ENCODE measurements at regions of chr13 and their contacts with region 1.

Region 1: DNA sequence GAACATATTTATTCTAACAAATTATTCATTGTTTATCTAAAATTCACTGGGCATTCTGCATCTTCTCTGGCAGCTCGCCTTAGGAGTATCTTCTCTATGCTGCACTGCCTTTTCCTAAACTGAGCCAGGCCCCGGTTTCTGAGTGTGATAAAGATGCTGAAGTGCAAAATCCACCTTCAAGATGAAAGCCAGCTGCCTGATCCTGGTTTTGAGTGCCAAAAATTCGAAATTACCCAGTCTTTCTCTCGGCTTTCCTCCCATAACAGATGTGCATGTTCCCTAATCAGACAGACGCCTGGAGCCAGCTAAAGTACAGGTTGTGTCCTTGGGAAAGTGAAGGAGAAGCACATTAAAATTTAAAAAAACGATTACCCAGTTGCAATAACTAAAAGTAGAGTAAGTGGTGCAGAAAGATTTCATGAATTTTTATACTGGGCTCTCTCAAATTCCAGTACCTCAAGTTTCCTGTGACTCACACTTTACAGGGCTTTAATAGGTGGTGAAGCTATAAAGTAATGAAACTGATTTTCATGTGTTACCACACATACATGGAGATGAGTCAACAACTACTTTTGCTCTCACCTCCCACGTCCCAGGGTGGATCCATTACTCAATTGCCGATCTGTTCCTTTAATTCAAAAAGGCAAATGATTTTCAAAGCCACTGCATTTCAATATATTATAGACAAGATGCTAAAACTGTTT is 65.0 kb upstream of the GTF2F2 start:
- DNase-seq: peak; percentile 73
- H3K4me3 Mint-ChIP-seq: peak overlapping the region; percentile 31
- H3K27ac Mint-ChIP-seq: peak overlapping the region; percentile 57
- H3K4me1 Mint-ChIP-seq: peaks cover 18% of the 10 kb centered on the region
- H3K27me3 Mint-ChIP-seq: peaks cover 43% of the 10 kb centered on the region

Region 2: DNA sequence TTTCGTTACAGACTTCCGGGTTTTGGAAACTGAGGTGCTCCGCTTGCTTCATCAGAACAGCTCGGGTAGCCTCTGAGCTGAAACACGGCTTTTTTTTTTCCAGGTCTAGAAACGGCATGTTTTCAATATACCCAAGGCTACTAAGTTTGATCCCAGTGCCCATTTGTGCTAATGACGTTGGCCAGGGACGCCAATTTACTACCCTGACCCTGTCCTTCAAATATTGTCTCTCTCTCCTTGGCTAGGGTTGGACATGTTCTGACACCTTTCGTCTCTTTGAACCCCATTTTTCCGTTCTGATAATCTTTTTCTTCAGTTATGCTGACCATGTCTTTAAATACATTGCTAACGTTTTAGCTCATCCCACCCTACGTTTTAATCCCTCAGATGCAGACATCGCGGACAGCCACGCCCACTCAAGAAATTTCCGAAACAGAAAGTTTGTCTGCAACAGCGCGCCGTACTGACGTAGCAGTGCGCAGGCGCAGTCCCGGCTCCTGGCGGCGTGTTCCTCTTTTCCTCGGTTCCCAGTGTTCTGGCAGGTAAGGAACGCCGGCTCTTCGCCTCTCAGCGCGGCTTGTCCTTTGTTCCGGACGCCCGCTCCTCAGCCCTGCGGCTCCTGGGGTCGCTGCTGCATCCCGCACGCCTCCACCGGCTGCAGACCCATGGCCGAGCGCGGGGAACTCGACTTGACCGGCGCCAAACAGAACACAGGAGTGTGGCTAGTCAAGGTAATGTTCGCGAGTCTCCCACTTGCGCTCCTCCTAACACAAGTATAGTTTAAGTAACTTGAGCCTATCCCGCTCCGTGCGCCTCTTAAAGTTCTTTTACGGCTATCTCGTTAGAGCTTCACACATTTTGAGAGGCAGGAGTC is 64.9 kb after region 1 on chr13 and contains the start of gene GTF2F2:
- intact Hi-C with region 1: loop called (anchors 1 kb)
- DNase-seq: peak; percentile 97
- H3K4me3 Mint-ChIP-seq: no peak within 1 kb of the TSS
- H3K27ac Mint-ChIP-seq: no peak within 1 kb of the TSS
- H3K4me1 Mint-ChIP-seq: peaks cover 7% of the 10 kb centered on the region
- H3K27me3 Mint-ChIP-seq: no peaks in the 10 kb centered on the region
- total RNA-seq, gene GTF2F2: 29.2 and 30.0 TPM in 2 replicates

Region 3: GRCh38 chr13:45206340-45206739 is 151.0 kb after region 1 on chr13:
- intact Hi-C with region 1: loop called (anchors 2 kb)
- DNase-seq: no peak
- H3K4me3 Mint-ChIP-seq: no peak overlapping the region
- H3K27ac Mint-ChIP-seq: peak overlapping the region; percentile 59
- H3K4me1 Mint-ChIP-seq: peaks cover 17% of the 10 kb centered on the region
- H3K27me3 Mint-ChIP-seq: no peaks in the 10 kb centered on the region